SK-N-SH (cell line): ENCODE measurements at regions of chr2 and their contacts with region 1.

Region 1: GRCh38 chr2:172172513-172173173 is 69.9 kb upstream of the DLX2 start:
- DNase-seq: peak; percentile 91
- H3K4me3 ChIP-seq: peak overlapping the region; percentile 61 to 67
- H3K27ac ChIP-seq: no peak overlapping the region
- H3K4me1 ChIP-seq: peaks cover 0 to 3% of the 10 kb centered on the region in 2 experiments; a peak in 1 of 4 replicates
- H3K27me3 ChIP-seq: no peaks in the 10 kb centered on the region
- CTCF ChIP-seq: peak; percentile 81
- EP300 ChIP-seq: no peak
- RAD21 ChIP-seq: peak; percentile 88

Region 2: DNA sequence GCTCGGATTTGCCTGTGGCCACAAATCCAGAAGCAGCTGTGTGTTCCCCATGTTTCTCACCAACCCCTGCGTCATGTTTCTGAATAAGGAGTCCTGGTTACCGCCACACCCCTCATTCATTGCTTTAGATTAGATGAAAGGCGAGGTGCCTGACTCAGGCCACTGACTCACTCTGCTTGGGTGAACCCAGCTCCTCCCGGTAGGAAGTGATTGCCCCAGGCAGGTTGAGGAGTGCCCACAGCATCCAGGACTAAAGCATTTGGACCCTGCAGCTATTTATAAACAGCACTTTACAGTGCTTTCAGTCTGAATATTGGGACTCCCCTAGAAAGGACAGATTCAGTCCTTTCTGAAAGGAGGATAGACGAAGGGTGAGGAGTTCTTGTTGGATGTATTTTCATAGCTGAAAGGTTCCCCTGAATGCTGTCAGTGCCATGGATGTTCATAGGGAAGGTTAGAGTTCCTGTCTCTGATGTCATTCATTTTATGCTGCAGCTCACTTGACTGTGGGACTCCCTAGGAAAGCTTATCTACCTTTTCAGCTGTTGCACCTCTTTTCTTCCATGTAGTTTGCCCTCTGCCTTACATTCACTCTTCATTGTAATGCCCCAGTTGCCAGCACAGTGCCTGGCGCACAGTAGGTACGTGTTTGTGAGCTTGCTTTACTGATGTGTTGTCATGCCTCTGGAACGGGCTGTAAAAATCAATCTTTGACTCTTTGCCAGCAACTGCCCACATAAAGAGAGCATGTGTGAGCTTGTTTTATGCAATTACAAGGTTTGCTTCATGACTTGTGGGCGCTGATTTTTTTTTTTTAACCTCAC is 269.6 kb after region 1 on chr2:
- CTCF ChIA-PET with region 1: interaction called, 15 read pairs
- POLR2A ChIA-PET with region 1: no interaction called
- DNase-seq: no peak
- H3K4me3 ChIP-seq: 0 out of 4 replicates have a peak overlapping the region, but pooled peaks of 1 of the 2 experiments have one; percentile 10
- H3K27ac ChIP-seq: peak overlapping the region in 1 of 2 experiments; percentile 85; a peak in 2 of 4 replicates
- H3K4me1 ChIP-seq: peaks cover 3 to 56% of the 10 kb centered on the region in 2 experiments
- H3K27me3 ChIP-seq: no peaks in the 10 kb centered on the region
- CTCF ChIP-seq: no peak
- EP300 ChIP-seq: peak in 1 of 2 experiments; percentile 16; a peak in 1 of 4 replicates
- RAD21 ChIP-seq: no peak

Region 3: GRCh38 chr2:172456002-172456401 is 283.4 kb after region 1 on chr2:
- CTCF ChIA-PET with region 1: interaction called, 346 read pairs
- POLR2A ChIA-PET with region 1: no interaction called
- DNase-seq: no peak
- H3K4me3 ChIP-seq: no peak overlapping the region
- H3K27ac ChIP-seq: no peak overlapping the region
- H3K4me1 ChIP-seq: peaks cover 0 to 11% of the 10 kb centered on the region in 2 experiments; a peak in 1 of 4 replicates
- H3K27me3 ChIP-seq: no peaks in the 10 kb centered on the region
- CTCF ChIP-seq: no peak
- EP300 ChIP-seq: no peak
- RAD21 ChIP-seq: no peak

Region 4: GRCh38 chr2:172496160-172496608 is 323.5 kb after region 1 on chr2:
- CTCF ChIA-PET with region 1: interaction called, 10 read pairs
- POLR2A ChIA-PET with region 1: no interaction called
- DNase-seq: no peak
- H3K4me3 ChIP-seq: no peak overlapping the region
- H3K27ac ChIP-seq: no peak overlapping the region
- H3K4me1 ChIP-seq: no peaks in the 10 kb centered on the region
- H3K27me3 ChIP-seq: no peaks in the 10 kb centered on the region
- CTCF ChIP-seq: no peak
- EP300 ChIP-seq: no peak
- RAD21 ChIP-seq: no peak